CD8-positive, alpha-beta memory T cell (primary cell): ENCODE measurements at regions of chr2 and their contacts with region 1.

Region 1: DNA sequence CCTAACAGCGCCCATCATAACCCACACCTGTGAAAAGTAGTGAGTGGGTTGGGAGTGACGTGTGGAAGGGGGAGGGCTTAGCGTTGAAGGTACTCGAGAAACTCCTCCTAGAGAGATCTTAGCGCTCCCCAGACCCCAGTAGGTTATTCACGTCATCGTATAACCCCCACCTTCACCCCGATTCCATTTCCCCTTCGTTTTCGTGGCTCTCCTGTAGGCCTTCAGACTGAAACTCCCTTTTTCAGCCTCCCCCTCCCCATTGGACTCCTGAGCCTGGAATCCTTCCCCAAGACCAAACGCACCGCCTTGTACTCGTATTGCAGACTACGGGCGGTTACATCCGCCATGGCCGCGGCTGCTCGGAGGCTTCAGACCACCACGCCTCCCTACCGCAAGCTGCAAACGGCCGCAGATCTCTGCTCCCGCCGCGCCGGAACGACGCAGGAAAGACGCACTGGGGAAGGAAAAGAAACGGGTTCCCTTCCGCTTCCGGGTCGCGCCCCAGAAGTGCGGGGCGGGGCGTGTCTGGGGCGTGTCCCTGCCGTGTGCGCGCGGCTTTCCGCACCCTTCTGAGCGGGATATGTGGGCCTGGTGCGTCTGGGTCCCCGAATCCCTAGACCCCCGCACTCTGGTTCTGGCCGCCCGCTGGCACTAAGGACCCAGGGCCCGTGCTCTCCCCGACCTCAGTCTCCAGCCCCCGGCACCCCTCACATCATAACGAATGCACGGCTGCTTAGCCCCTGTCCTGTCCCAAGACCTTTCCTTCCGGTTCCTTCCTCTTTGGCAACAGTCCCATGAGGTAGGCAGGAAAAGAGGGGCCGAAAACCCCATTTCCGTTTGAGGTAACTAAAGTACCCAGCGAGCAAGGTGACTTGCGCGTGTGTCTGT is at the start of gene SNRNP200:
- DNase-seq: peak; percentile 88 to 93 (median 92)
- H3K4me3 ChIP-seq: peak within 1 kb of the TSS; percentile 99
- H3K4me3 Mint-ChIP-seq: peak within 1 kb of the TSS; percentile 96 to 99 (median 98)
- H3K27ac ChIP-seq: peak within 1 kb of the TSS; percentile 99
- H3K27ac Mint-ChIP-seq: peak within 1 kb of the TSS; percentile 98 to 100 (median 100)
- H3K4me1 ChIP-seq: peaks cover 44% of the 10 kb centered on the region
- H3K4me1 Mint-ChIP-seq: peaks cover 60 to 75% (median 62%) of the 10 kb centered on the region in 3 donors
- H3K27me3 ChIP-seq: no peaks in the 10 kb centered on the region
- H3K27me3 Mint-ChIP-seq: no peaks in the 10 kb centered on the region
- total RNA-seq, gene SNRNP200: 203 to 206 TPM

Region 2: GRCh38 chr2:96208143-96209010 is 97.0 kb before region 1 on chr2 and contains the start of gene STARD7:
- CTCF ChIA-PET with region 1: no interaction called
- POLR2A ChIA-PET with region 1: no interaction called
- DNase-seq: peak; percentile 94 to 96 (median 94)
- H3K4me3 ChIP-seq: peak within 1 kb of the TSS; percentile 96
- H3K4me3 Mint-ChIP-seq: peak within 1 kb of the TSS; percentile 90 to 97 (median 92)
- H3K27ac ChIP-seq: peak within 1 kb of the TSS; percentile 82
- H3K27ac Mint-ChIP-seq: peak within 1 kb of the TSS; percentile 87 to 97 (median 93)
- H3K4me1 ChIP-seq: peaks cover 57% of the 10 kb centered on the region
- H3K4me1 Mint-ChIP-seq: peaks cover 51 to 55% (median 54%) of the 10 kb centered on the region in 3 donors
- H3K27me3 ChIP-seq: no peaks in the 10 kb centered on the region
- H3K27me3 Mint-ChIP-seq: no peaks in the 10 kb centered on the region
- total RNA-seq, gene STARD7: 255 to 256 TPM

Region 3: GRCh38 chr2:96265840-96266679 is 39.3 kb before region 1 on chr2 and contains the starts of genes CIAO1 and TMEM127:
- CTCF ChIA-PET with region 1: interaction called, 3 read pairs
- POLR2A ChIA-PET with region 1: interaction called, 25 read pairs
- DNase-seq: peak; percentile 96 to 98 (median 98)
- H3K4me3 ChIP-seq: peak within 1 kb of the TSS; percentile 82
- H3K4me3 Mint-ChIP-seq: peak within 1 kb of the TSS; percentile 87 to 97 (median 94)
- H3K27ac ChIP-seq: peak within 1 kb of the TSS; percentile 89
- H3K27ac Mint-ChIP-seq: peak within 1 kb of the TSS; percentile 79 to 98 (median 96)
- H3K4me1 ChIP-seq: peaks cover 40% of the 10 kb centered on the region
- H3K4me1 Mint-ChIP-seq: peaks cover 39 to 56% (median 54%) of the 10 kb centered on the region in 3 donors
- H3K27me3 ChIP-seq: no peaks in the 10 kb centered on the region
- H3K27me3 Mint-ChIP-seq: no peaks in the 10 kb centered on the region
- total RNA-seq, gene CIAO1: 73.8 to 77.9 TPM
- total RNA-seq, gene TMEM127: 29.8 to 33.4 TPM

Region 4: DNA sequence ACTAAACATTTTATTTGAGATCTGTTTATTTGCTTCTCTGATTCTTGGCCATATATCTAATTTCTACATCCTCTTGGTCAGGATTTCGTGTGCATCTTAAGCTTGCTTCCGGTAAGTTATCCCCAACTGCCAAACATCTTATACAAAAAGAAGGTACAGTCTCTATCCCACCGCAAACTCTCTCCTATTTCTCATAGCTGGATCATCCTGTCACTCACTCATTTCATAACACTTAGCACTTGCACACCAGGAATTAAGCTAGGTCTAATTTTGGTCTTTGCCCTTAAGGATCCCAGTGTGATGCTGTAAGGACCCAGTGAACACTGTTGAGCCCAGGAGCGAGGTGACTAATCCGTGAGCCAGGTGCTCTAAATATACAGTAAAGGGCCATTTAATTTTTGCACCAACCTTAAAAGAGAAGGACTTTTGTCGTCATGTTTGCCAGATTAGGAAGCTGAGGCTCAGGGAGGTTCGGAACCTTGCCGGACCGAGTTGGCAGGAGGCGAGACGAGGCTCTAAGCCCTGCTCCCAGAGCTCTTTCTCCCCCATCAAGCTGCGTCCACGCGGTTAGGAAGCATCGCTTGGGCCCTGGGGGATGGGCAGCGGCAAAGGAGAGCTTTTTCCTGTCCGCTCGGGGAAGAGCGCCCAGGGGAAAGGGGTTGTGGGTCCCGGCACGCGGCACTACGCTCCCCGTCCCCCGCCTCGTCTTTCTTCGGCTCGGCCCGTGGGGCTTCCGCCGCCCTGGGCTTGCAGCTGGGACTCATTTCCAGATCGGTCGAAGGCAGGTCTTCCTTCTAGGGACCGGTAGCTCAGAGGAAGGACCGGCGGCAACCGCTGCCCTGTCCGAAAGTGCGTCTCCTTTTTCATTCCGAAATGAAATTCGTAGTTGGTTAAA is 15.6 kb after region 1 on chr2:
- CTCF ChIA-PET with region 1: interaction called, 6 read pairs
- POLR2A ChIA-PET with region 1: interaction called, 42 read pairs
- DNase-seq: no peak
- H3K4me3 ChIP-seq: peak overlapping the region; percentile 47
- H3K4me3 Mint-ChIP-seq: peak overlapping the region; percentile 86 to 95 (median 91)
- H3K27ac ChIP-seq: peak overlapping the region; percentile 55
- H3K27ac Mint-ChIP-seq: peak overlapping the region; percentile 62 to 96 (median 81)
- H3K4me1 ChIP-seq: peaks cover 32% of the 10 kb centered on the region
- H3K4me1 Mint-ChIP-seq: peaks cover 57 to 76% (median 73%) of the 10 kb centered on the region in 3 donors
- H3K27me3 ChIP-seq: no peaks in the 10 kb centered on the region
- H3K27me3 Mint-ChIP-seq: no peaks in the 10 kb centered on the region

Region 5: DNA sequence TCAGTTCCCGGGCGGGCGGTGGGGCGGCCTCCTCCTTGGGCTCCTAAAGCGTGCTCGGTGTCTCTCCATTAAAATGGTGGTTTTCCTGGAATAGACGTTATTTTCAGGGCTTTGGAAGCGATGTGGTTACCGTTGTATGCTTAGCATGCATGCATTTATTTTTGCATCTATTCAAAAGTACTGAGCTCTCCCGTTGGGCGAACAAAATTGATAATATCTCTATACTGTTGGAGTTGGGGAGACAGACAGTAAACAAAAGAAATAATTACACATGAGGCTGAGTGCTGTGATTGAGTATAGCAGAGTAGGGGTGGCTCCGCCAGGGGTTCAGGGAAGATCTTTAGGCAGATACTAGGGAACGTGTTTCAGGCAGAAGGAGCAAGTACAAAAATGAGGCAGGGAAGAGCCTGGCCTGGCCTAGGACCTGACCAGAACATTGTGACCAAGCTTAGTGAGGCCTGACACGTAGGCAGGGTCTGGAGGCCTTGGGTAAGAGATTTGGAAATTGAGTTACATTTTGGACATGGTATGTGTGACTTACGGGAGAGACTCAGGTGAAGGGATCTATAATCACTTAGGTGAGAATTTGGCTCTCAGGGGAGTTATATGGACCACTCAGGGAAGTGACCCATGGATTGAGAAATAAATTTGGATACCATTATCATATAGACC is 30.9 kb after region 1 on chr2:
- CTCF ChIA-PET with region 1: no interaction called
- POLR2A ChIA-PET with region 1: interaction called, 15 read pairs
- DNase-seq: no peak
- H3K4me3 ChIP-seq: peak overlapping the region; percentile 79
- H3K4me3 Mint-ChIP-seq: peak overlapping the region; percentile 68 to 94 (median 80)
- H3K27ac ChIP-seq: peak overlapping the region; percentile 24
- H3K27ac Mint-ChIP-seq: peak overlapping the region; percentile 29 to 100 (median 69)
- H3K4me1 ChIP-seq: peaks cover 12% of the 10 kb centered on the region
- H3K4me1 Mint-ChIP-seq: peaks cover 38 to 66% (median 62%) of the 10 kb centered on the region in 3 donors
- H3K27me3 ChIP-seq: no peaks in the 10 kb centered on the region
- H3K27me3 Mint-ChIP-seq: no peaks in the 10 kb centered on the region

Region 6: GRCh38 chr2:96344011-96344410 is 38.7 kb after region 1 on chr2:
- CTCF ChIA-PET with region 1: interaction called, 19 read pairs
- POLR2A ChIA-PET with region 1: interaction called, 22 read pairs
- DNase-seq: peak in 3 of 5 donors; percentile 29 to 80 (median 68)
- H3K4me3 ChIP-seq: no peak overlapping the region
- H3K4me3 Mint-ChIP-seq: peak overlapping the region in 6 of 7 donors; percentile 67 to 80 (median 70)
- H3K27ac ChIP-seq: peak overlapping the region; percentile 32
- H3K27ac Mint-ChIP-seq: peak overlapping the region; percentile 85 to 98 (median 93)
- H3K4me1 ChIP-seq: peaks cover 46% of the 10 kb centered on the region
- H3K4me1 Mint-ChIP-seq: peaks cover 55 to 70% (median 66%) of the 10 kb centered on the region in 3 donors
- H3K27me3 ChIP-seq: no peaks in the 10 kb centered on the region
- H3K27me3 Mint-ChIP-seq: no peaks in the 10 kb centered on the region

Region 7: DNA sequence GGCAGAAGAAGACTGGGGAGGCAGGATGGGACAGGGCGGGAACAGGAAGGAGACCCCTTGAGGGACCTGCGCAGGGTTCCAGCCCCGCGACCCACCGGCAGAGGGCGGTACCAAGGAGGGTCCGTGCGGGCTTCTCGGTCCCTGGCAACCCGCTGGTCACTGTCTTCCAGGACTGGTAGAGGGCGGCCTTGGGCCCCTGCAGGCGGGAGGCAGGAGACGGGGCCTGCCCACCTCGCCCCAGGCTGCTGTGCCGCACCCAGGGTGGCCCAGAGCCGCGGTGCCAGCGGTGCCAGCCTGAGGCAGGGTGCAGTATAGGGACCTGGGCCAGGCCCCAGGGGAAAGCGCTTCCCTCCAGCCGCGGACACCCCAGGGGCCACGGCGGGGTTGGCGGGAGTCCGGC is 165.3 kb after region 1 on chr2:
- CTCF ChIA-PET with region 1: no interaction called
- POLR2A ChIA-PET with region 1: no interaction called
- DNase-seq: peak; percentile 18 to 53 (median 29)
- H3K4me3 ChIP-seq: no peak overlapping the region
- H3K4me3 Mint-ChIP-seq: peak overlapping the region in 2 of 7 donors; percentile 10 to 74
- H3K27ac ChIP-seq: no peak overlapping the region
- H3K27ac Mint-ChIP-seq: peak overlapping the region in 1 of 8 donors; percentile 81
- H3K4me1 ChIP-seq: no peaks in the 10 kb centered on the region
- H3K4me1 Mint-ChIP-seq: peaks cover 0 to 3% (median 2%) of the 10 kb centered on the region in 3 donors
- H3K27me3 ChIP-seq: peaks cover 5% of the 10 kb centered on the region
- H3K27me3 Mint-ChIP-seq: peaks cover 4 to 15% of the 10 kb centered on the region in 2 donors